Caki2 (cell line): ENCODE measurements at regions of chr1 and their contacts with region 1.

Region 1: GRCh38 chr1:178542560-178543356 is 29.8 kb downstream of the TEX35 start:
- DNase-seq: peak; percentile 88

Region 2: GRCh38 chr1:179002552-179003345 is 460.0 kb after region 1 on chr1:
- in situ Hi-C with region 1: loop called (anchors 25 kb)
- DNase-seq: peak; percentile 80